ENCODE measurements at regions of chr13 and their contacts with region 1.

Region 1: DNA sequence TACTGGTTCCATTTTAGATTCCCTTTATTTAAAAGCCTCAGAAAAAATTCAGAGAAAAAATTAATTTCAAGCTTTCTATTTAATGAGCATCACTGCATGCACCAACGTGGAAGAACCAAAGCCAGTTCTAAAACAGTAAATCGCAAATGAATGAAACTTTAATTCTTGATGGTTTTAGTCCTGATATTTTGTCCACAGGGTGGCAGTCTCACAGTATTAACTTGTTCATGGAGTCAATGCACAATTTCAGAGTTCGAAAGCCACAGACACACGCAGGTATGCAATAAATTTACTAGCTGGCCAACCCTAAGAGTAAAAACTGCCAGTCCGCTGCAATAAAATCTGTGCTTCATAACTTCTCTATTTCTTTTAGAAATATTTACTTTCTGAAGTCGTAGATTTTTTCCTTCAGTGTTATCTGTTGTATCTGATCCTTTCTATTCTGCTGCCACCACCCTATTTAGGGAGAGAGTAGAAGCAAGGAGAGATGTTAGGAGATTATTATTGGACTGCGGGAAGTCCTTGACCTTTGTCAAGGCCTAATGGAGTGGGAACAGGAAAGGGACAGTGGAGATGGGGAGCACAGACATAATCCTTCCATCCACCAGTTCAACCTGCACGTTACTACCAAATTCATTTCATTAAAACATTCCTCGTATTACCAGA is 7.0 kb upstream of the WBP4 start:
- DNase-seq: peak; percentile 50 to 60 (median 56)
- H3K4me3 ChIP-seq: no peak overlapping the region
- H3K4me3 Mint-ChIP-seq: peak overlapping the region in 3 of 8 donors; percentile 27 to 73 (median 31)
- H3K27ac ChIP-seq: no peak overlapping the region
- H3K27ac Mint-ChIP-seq: peak overlapping the region in 4 of 7 donors; percentile 8 to 40 (median 22)
- H3K4me1 ChIP-seq: peaks cover 32% of the 10 kb centered on the region
- H3K4me1 Mint-ChIP-seq: peaks cover 30 to 50% (median 35%) of the 10 kb centered on the region in 4 donors
- H3K27me3 ChIP-seq: no peaks in the 10 kb centered on the region
- H3K27me3 Mint-ChIP-seq: no peaks in the 10 kb centered on the region

Region 2: DNA sequence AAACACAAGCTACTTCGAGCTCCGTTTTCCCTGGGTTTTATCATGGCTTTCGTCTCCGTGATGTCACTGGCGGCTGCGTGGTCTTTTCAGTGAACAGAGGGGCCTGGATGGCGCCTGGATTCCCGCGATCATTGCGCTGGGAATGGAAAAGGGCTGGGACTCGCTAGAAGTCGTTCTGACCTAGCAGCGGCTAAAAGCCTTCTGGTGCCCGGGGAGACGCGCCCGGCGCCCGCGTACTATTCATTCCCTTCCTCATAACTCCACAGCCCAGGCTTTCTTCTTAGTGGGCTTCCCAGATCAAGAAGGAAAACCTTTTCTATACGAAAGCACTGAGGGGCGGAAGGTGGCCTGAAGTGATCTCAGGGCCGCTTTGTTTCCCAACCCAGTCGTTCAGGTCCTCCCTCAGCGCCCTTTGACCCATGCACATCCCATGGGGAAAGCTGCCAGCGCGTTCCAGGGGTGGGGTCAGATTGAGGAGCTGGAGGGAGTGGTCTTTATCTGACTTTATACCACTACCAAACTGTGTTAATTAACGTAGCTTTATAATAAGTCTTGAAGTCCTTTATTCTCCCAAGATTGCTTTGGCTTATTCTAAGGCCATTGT is 131.8 kb before region 1 on chr13:
- CTCF ChIA-PET with region 1: interaction called, 14 read pairs
- POLR2A ChIA-PET with region 1: interaction called, 30 read pairs
- intact Hi-C with region 1: no loop called
- DNase-seq: no peak
- H3K4me3 ChIP-seq: no peak overlapping the region
- H3K4me3 Mint-ChIP-seq: peak overlapping the region; percentile 63 to 83 (median 73)
- H3K27ac ChIP-seq: no peak overlapping the region
- H3K27ac Mint-ChIP-seq: peak overlapping the region in 6 of 7 donors; percentile 70 to 90 (median 80)
- H3K4me1 ChIP-seq: peaks cover 15% of the 10 kb centered on the region
- H3K4me1 Mint-ChIP-seq: peaks cover 12 to 29% (median 21%) of the 10 kb centered on the region in 4 donors
- H3K27me3 ChIP-seq: no peaks in the 10 kb centered on the region
- H3K27me3 Mint-ChIP-seq: no peaks in the 10 kb centered on the region

Region 3: GRCh38 chr13:40982772-40983171 is 71.6 kb before region 1 on chr13:
- CTCF ChIA-PET with region 1: interaction called, 11 read pairs
- POLR2A ChIA-PET with region 1: interaction called, 48 read pairs
- intact Hi-C with region 1: no loop called
- DNase-seq: peak; percentile 78 to 90 (median 84)
- H3K4me3 ChIP-seq: peak overlapping the region; percentile 76 to 90
- H3K4me3 Mint-ChIP-seq: peak overlapping the region; percentile 82 to 98 (median 92)
- H3K27ac ChIP-seq: peak overlapping the region; percentile 82
- H3K27ac Mint-ChIP-seq: peak overlapping the region; percentile 95 to 99 (median 97)
- H3K4me1 ChIP-seq: peaks cover 49% of the 10 kb centered on the region
- H3K4me1 Mint-ChIP-seq: peaks cover 38 to 57% (median 45%) of the 10 kb centered on the region in 4 donors
- H3K27me3 ChIP-seq: no peaks in the 10 kb centered on the region
- H3K27me3 Mint-ChIP-seq: no peaks in the 10 kb centered on the region

Region 4: GRCh38 chr13:41004875-41005693 is 49.3 kb before region 1 on chr13:
- CTCF ChIA-PET with region 1: interaction called, 12 read pairs
- POLR2A ChIA-PET with region 1: interaction called, 7 read pairs
- intact Hi-C with region 1: no loop called
- DNase-seq: peak; percentile 52 to 72 (median 64)
- H3K4me3 ChIP-seq: peak overlapping the region in 1 of 2 donors; percentile 7
- H3K4me3 Mint-ChIP-seq: peak overlapping the region; percentile 38 to 87 (median 62)
- H3K27ac ChIP-seq: peak overlapping the region; percentile 59
- H3K27ac Mint-ChIP-seq: peak overlapping the region; percentile 73 to 94 (median 90)
- H3K4me1 ChIP-seq: peaks cover 93% of the 10 kb centered on the region
- H3K4me1 Mint-ChIP-seq: peaks cover 49 to 79% (median 60%) of the 10 kb centered on the region in 4 donors
- H3K27me3 ChIP-seq: no peaks in the 10 kb centered on the region
- H3K27me3 Mint-ChIP-seq: no peaks in the 10 kb centered on the region

Region 5: DNA sequence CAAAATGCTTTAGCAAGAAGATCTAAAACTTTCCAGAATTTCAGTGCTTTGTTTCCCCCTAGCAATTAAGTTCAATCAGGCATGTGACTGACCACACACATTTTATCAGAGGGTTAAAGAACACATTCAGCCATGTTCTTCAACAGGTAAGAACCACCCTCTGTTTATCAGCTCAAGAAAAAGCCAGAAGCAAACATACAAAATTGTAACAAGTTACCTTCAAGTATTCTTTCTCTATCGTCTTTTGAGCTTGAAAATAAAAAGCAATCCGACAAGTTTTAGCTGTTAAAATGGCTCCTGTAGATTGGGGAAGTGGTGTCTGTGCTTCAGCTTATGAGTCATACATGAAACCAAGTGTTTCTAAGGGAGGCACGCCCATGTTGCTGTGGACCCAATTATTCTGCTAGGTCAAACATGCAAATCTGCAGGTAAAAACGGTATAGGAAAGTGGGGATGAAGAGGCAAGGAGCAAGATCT is 35.3 kb before region 1 on chr13 and contains the start of gene ELF1:
- CTCF ChIA-PET with region 1: interaction called, 48 read pairs
- POLR2A ChIA-PET with region 1: interaction called, 104 read pairs
- intact Hi-C with region 1: no loop called
- DNase-seq: peak; percentile 74 to 89 (median 80)
- H3K4me3 ChIP-seq: peak within 1 kb of the TSS; percentile 65 to 72
- H3K4me3 Mint-ChIP-seq: peak within 1 kb of the TSS; percentile 83 to 98 (median 95)
- H3K27ac ChIP-seq: peak within 1 kb of the TSS; percentile 85
- H3K27ac Mint-ChIP-seq: peak within 1 kb of the TSS; percentile 90 to 99 (median 96)
- H3K4me1 ChIP-seq: peaks cover 34% of the 10 kb centered on the region
- H3K4me1 Mint-ChIP-seq: peaks cover 26 to 39% (median 33%) of the 10 kb centered on the region in 4 donors
- H3K27me3 ChIP-seq: no peaks in the 10 kb centered on the region
- H3K27me3 Mint-ChIP-seq: no peaks in the 10 kb centered on the region
- total RNA-seq, gene ELF1: 188 to 192 TPM

Region 6: DNA sequence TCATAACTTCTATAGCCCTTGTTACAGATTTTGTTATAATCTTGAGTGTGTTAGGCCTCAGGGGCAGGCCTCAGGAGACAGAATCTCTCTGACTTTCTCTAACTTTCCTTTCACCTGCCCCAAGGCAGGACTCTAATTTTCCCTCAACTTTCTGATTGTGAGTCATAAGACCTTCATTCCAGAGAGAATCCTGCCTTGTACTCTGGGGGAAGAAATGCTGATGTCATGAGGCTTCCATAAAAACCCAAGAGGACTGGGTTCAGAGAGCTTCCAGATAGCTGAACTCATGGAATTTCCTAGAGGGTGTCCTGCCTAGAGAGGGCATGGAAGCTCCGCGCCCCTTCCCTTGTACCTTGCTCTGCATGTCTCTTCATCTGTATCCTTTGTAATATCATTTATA is 83.6 kb after region 1 on chr13:
- CTCF ChIA-PET with region 1: no interaction called
- POLR2A ChIA-PET with region 1: no interaction called
- intact Hi-C with region 1: no loop called
- DNase-seq: no peak
- H3K4me3 ChIP-seq: no peak overlapping the region
- H3K4me3 Mint-ChIP-seq: no peak overlapping the region
- H3K27ac ChIP-seq: no peak overlapping the region
- H3K27ac Mint-ChIP-seq: no peak overlapping the region
- H3K4me1 ChIP-seq: peaks cover 8% of the 10 kb centered on the region
- H3K4me1 Mint-ChIP-seq: peaks cover 9 to 14% (median 10%) of the 10 kb centered on the region in 4 donors
- H3K27me3 ChIP-seq: no peaks in the 10 kb centered on the region
- H3K27me3 Mint-ChIP-seq: no peaks in the 10 kb centered on the region

Region 7: DNA sequence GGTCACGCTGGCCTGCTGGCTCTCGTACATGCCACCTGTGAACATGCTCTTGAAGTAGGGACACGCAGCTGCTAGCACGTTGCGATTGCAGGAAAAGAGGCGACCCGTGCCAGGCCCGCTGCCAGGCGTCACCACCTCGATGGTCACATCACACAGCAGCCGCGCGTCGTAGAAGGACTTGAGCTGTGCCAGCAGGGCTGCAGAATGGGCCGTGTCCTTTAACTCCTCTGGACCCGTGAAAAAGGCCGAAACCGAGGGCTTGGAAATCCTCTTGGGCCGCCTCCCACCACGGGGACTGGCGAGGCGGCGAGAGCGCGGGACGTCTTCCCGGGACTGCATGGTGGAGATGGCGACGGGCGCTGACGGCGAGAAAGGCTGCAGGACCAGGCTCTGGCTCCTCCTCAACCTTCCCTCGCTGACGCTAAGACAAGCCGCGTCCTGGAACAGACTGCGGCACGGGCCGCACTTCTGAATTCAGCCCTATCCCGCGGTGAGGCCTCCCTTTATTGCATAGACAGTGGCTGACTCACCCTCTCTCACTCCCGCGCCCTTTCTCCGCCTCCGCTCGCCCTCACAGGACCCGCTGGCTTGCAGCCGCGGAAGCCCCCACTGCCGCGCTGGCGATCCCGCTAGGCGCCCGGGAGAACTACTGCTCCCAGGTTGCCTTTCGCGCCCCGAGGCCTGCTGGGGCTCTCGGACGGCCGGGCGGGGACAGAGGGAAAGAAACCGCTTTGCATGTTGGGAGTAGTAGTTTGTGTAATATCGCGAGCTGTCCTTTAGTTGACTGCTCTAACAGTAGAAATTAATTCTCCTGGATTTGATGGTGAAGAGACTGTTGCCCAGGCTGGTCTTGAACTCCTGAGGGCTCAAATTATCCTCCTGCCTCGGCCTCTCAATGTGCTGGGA is 139.8 kb after region 1 on chr13 and contains the start of gene KBTBD7:
- CTCF ChIA-PET with region 1: interaction called, 3 read pairs
- POLR2A ChIA-PET with region 1: no interaction called
- intact Hi-C with region 1: loop called (anchors 1 kb)
- DNase-seq: peak; percentile 83 to 90 (median 86)
- H3K4me3 ChIP-seq: peak within 1 kb of the TSS; percentile 18 to 94
- H3K4me3 Mint-ChIP-seq: peak within 1 kb of the TSS; percentile 93 to 97 (median 94)
- H3K27ac ChIP-seq: peak within 1 kb of the TSS; percentile 72
- H3K27ac Mint-ChIP-seq: peak within 1 kb of the TSS; percentile 72 to 97 (median 92)
- H3K4me1 ChIP-seq: peaks cover 29% of the 10 kb centered on the region
- H3K4me1 Mint-ChIP-seq: peaks cover 23 to 45% (median 33%) of the 10 kb centered on the region in 4 donors
- H3K27me3 ChIP-seq: no peaks in the 10 kb centered on the region
- H3K27me3 Mint-ChIP-seq: no peaks in the 10 kb centered on the region
- total RNA-seq, gene KBTBD7: 11.1 to 11.8 TPM

Region 8: GRCh38 chr13:41206467-41206866 is 152.1 kb after region 1 on chr13:
- CTCF ChIA-PET with region 1: no interaction called
- POLR2A ChIA-PET with region 1: no interaction called
- intact Hi-C with region 1: no loop called
- DNase-seq: no peak
- H3K4me3 ChIP-seq: no peak overlapping the region
- H3K4me3 Mint-ChIP-seq: no peak overlapping the region
- H3K27ac ChIP-seq: no peak overlapping the region
- H3K27ac Mint-ChIP-seq: no peak overlapping the region
- H3K4me1 ChIP-seq: no peaks in the 10 kb centered on the region
- H3K4me1 Mint-ChIP-seq: no peaks in the 10 kb centered on the region
- H3K27me3 ChIP-seq: no peaks in the 10 kb centered on the region
- H3K27me3 Mint-ChIP-seq: no peaks in the 10 kb centered on the region